GM13976 (cell line): ENCODE measurements at regions of chr12 and their contacts with region 1.

Region 1: GRCh38 chr12:15276088-15276698 is 46.1 kb upstream of the PTPRO start:
- DNase-seq: peak; percentile 22
- CTCF ChIP-seq: peak; percentile 50

Region 2: GRCh38 chr12:14920475-14921126 is 355.6 kb before region 1 on chr12:
- in situ Hi-C with region 1: no loop called
- DNase-seq: no peak
- CTCF ChIP-seq: no peak

Region 3: GRCh38 chr12:15522565-15523187 is 246.5 kb after region 1 on chr12:
- in situ Hi-C with region 1: loop called (anchors 5 kb)
- DNase-seq: peak; percentile 27
- CTCF ChIP-seq: peak; percentile 39

Region 4: DNA sequence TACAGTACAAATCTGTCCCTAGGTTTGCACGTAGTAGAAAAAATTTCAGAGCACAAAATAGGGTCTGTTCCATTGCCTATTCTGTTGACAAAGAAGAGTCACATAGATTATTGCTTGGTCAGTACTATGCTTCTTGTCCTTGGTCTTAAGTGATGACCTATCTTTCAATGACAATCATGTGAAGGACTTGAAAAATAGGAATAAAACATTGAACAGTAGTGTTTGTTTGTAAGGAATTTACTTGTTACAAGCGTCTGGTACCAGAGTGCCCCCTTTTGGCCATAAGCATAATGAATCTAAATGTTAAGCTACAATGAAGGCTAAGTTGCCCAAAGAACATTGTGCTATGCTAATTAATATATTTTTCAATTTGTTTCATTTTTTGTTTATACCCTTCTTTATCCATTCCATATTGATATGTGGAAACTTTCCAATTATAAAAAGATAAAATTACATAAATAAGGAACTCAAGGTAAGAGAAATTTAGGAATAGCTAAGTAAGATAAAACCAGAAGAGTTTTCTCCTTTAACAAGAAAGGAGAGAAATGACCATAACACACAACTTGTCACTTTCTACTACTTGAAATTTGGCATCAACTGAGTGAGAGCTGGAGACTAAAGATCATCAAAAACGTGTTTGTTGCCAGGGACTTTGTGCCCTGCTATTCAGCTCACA is 308.3 kb after region 1 on chr12:
- in situ Hi-C with region 1: loop called (anchors 10 kb)
- DNase-seq: peak; percentile 26
- CTCF ChIP-seq: peak; percentile 59

Region 5: DNA sequence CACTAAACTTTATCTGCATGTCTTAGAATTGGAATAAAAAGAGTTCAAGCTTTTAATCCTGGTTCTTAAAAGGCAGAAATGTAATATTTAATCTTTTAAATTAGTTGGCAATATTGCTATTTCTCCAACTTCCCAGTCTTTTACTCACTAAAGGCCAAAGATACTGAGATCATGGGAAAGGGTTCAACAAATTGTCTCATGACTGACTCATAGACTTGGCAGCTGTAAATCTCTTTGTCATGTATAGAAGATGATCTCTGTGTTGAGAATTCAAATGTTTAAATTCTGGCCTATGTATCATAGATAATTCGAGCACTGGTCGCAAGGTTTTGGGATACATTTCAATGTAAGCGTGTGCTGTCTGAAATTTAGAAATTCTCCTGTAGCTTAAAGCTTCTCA is 565.9 kb after region 1 on chr12:
- in situ Hi-C with region 1: loop called (anchors 25 kb)
- DNase-seq: no peak
- CTCF ChIP-seq: no peak